Activated CD8-positive, alpha-beta T cell treated with anti-CD3 and anti-CD28 coated beads, Interleukin-2, amount 10 ng/mL, durations not matched to agents 7 days and 5 days (primary cell): ENCODE measurements at regions of chr1 and their contacts with region 1.

Region 1: DNA sequence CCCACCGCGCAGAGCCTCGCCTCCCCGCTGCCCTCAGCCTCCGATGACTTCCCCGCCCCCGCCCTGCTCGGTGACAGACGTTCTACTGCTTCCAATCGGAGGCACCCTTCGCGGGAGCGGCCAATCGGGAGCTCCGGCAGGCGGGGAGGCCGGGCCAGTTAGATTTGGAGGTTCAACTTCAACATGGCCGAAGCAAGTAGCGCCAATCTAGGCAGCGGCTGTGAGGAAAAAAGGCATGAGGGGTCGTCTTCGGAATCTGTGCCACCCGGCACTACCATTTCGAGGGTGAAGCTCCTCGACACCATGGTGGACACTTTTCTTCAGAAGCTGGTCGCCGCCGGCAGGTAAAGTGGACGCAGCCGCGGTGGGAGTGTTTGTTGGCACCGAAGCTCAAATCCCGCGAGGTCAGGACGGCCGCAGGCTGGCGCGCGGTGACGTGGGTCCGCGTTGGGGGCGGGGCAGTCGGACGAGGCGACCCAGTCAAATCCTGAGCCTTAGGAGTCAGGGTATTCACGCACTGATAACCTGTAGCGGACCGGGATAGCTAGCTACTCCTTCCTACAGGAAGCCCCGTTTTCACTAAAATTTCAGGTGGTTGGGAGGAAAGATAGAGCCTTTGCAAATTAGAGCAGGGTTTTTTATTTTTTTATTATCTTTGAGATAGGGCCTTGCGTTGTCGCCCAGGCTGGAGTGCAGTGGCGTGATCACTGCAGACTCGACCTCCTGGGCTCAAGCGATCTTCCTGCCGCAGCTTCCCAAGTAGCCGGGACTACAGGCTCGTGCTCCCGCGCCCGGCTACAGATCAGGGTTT is at the start of gene PMF1:
- DNase-seq: peak; percentile 98
- ATAC-seq: peak; percentile 96
- H3K4me3 Mint-ChIP-seq: peak within 1 kb of the TSS; percentile 96
- H3K27ac Mint-ChIP-seq: peak within 1 kb of the TSS; percentile 99
- H3K4me1 Mint-ChIP-seq: peaks cover 45% of the 10 kb centered on the region
- H3K27me3 Mint-ChIP-seq: no peaks in the 10 kb centered on the region
- total RNA-seq, gene PMF1: 72.3 to 77.3 TPM

Region 2: DNA sequence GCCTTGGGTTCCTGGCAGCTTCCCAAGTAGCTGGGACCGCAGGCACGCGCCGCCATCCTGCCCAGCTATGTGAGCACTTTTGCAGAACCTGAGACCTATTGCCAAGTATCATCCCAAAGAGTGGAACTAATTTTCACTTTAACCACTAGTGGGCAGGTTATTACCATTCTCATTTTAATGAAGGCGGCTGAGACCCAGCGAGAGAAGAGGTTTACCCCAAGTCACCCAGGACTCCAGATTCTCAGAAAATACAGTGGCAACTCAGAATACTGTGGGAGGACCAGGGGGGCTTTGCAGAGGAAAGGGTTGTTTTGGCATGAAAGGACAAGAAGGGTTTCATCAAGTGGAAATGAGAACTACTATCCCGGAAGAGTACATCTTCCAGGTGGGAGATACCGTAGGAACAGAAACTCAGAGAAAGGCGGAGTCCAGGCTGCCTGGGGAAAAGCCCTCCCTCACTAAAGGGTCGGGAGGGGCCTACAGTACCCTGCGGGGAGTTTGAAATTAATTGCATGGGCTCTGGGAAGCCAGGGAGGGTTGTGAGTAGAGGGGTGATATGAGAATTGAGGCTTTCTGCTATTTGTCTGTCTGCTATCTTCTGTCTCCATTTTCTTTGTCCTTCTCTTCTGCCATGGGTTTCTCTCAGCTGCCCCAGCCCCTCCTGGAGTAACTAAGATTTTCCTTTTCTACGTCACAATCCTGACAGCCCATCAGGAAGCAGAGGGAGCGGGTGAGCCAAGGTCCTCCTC is 66.8 kb before region 1 on chr1:
- CTCF ChIA-PET with region 1: interaction called, 5 read pairs
- POLR2A ChIA-PET with region 1: interaction called, 37 read pairs
- DNase-seq: peak; percentile 72
- ATAC-seq: peak; percentile 80
- H3K4me3 Mint-ChIP-seq: peak overlapping the region; percentile 63
- H3K27ac Mint-ChIP-seq: peak overlapping the region; percentile 85
- H3K4me1 Mint-ChIP-seq: peaks cover 47% of the 10 kb centered on the region
- H3K27me3 Mint-ChIP-seq: no peaks in the 10 kb centered on the region

Region 3: GRCh38 chr1:156154317-156154749 is 58.7 kb before region 1 on chr1:
- CTCF ChIA-PET with region 1: interaction called, 5 read pairs
- POLR2A ChIA-PET with region 1: interaction called, 37 read pairs
- DNase-seq: peak; percentile 77
- ATAC-seq: peak; percentile 93
- H3K4me3 Mint-ChIP-seq: peak overlapping the region; percentile 81
- H3K27ac Mint-ChIP-seq: peak overlapping the region; percentile 74
- H3K4me1 Mint-ChIP-seq: peaks cover 84% of the 10 kb centered on the region
- H3K27me3 Mint-ChIP-seq: no peaks in the 10 kb centered on the region

Region 4: GRCh38 chr1:156193488-156194299 is 19.3 kb before region 1 on chr1 and contains the start of gene SLC25A44:
- CTCF ChIA-PET with region 1: interaction called, 18 read pairs
- POLR2A ChIA-PET with region 1: interaction called, 195 read pairs
- DNase-seq: peak; percentile 98
- ATAC-seq: peak; percentile 98
- H3K4me3 Mint-ChIP-seq: peak within 1 kb of the TSS; percentile 89
- H3K27ac Mint-ChIP-seq: peak within 1 kb of the TSS; percentile 87
- H3K4me1 Mint-ChIP-seq: peaks cover 57% of the 10 kb centered on the region
- H3K27me3 Mint-ChIP-seq: no peaks in the 10 kb centered on the region
- total RNA-seq, gene SLC25A44: 31.8 to 33.8 TPM

Region 5: GRCh38 chr1:156198831-156199349 is 14.1 kb before region 1 on chr1:
- CTCF ChIA-PET with region 1: interaction called, 18 read pairs
- POLR2A ChIA-PET with region 1: interaction called, 195 read pairs
- DNase-seq: no peak
- ATAC-seq: peak; percentile 44
- H3K4me3 Mint-ChIP-seq: peak overlapping the region; percentile 62
- H3K27ac Mint-ChIP-seq: peak overlapping the region; percentile 90
- H3K4me1 Mint-ChIP-seq: peaks cover 64% of the 10 kb centered on the region
- H3K27me3 Mint-ChIP-seq: no peaks in the 10 kb centered on the region

Region 6: GRCh38 chr1:156245451-156246232 is 32.6 kb after region 1 on chr1:
- CTCF ChIA-PET with region 1: no interaction called
- POLR2A ChIA-PET with region 1: interaction called, 10 read pairs
- DNase-seq: peak; percentile 65
- ATAC-seq: peak; percentile 82
- H3K4me3 Mint-ChIP-seq: peak overlapping the region; percentile 75
- H3K27ac Mint-ChIP-seq: peak overlapping the region; percentile 93
- H3K4me1 Mint-ChIP-seq: peaks cover 37% of the 10 kb centered on the region
- H3K27me3 Mint-ChIP-seq: no peaks in the 10 kb centered on the region

Region 7: GRCh38 chr1:156705918-156706656 is 493.0 kb after region 1 on chr1:
- CTCF ChIA-PET with region 1: no interaction called
- POLR2A ChIA-PET with region 1: no interaction called
- DNase-seq: peak; percentile 70
- ATAC-seq: peak; percentile 65
- H3K4me3 Mint-ChIP-seq: peak overlapping the region; percentile 71
- H3K27ac Mint-ChIP-seq: no peak overlapping the region
- H3K4me1 Mint-ChIP-seq: peaks cover 28% of the 10 kb centered on the region
- H3K27me3 Mint-ChIP-seq: peaks cover 33% of the 10 kb centered on the region